ENCODE measurements at regions of chr10 and their contacts with region 1.

Region 1: DNA sequence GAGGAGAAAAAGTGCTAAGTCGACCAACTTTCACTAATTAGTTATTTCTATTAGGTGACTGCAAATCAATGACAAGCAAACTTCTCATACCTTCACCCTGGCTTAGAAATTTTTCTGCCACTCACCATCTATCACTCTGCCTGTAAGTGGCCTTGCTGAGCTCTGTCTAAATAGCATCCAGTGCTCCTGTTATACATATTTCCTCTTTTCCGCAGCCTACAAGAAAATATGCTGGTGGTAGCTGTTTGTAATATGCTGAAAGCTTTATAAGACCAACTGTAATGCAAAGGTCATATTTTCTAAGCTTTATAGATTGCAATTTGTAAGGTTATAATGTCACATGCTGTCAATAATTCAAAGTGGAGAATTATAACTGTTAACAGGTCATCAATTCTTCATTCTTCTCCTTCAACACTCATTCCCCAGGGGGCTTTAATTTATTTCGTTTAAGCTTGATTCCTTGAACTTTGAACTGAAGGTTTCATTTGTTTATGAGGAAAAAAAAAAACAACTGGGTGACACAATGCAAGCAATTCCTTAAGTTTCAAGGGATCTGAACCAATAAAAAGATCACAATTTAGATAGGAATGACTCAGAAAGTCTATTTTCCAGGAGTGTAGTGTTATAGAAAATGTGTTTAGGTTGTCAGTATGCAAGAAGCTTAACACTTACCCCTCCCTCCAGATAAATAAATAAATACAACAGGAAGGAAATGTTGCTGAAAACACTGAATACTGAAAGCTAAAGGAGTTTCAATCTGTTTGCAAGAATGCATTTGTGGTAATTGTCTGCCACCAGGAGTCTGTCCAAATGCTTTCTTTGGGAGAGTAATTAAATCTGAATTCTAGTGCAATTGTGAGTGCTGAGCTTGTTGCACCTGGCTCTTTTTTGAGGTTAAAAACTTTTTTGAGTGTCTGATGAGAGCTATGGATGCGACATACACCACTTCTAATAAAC is 183.7 kb downstream of the SORCS1 start:
- DNase-seq: no peak
- CTCF ChIP-seq: peak; percentile 31

Region 2: GRCh38 chr10:106711313-106711906 is 269.4 kb before region 1 on chr10:
- CTCF ChIA-PET with region 1: interaction called, 11 read pairs
- POLR2A ChIA-PET with region 1: no interaction called
- DNase-seq: peak; percentile 67
- CTCF ChIP-seq: peak; percentile 67

Region 3: DNA sequence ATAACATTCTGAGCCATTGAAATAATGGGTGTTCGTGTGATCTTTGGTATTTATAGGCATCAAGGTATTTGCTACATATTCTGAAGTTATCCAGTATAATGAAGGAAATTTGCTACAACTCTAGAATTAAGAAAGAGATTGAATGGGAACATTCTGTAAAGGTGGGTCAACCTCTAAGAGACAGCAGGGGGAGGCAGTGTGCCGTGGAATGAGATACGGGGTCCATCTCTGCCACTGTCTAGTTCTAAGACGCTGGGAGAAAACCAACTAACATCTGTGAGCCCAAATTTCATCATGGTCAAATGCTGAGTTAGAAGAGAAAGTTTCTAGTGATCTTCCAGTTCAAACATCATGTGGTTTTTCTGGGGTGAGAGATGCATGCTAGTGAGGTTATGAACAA is 185.2 kb before region 1 on chr10:
- CTCF ChIA-PET with region 1: interaction called, 12 read pairs
- POLR2A ChIA-PET with region 1: no interaction called
- DNase-seq: peak; percentile 38
- CTCF ChIP-seq: peak; percentile 53

Measured in GM10248 (cell line).